ENCODE measurements at regions of chr17 and their contacts with region 1.

Region 1: GRCh38 chr17:58006924-58007780 is at the start of gene SRSF1:
- DNase-seq: peak; percentile 90 to 99 (median 94)
- ATAC-seq: peak; percentile 85
- H3K4me3 ChIP-seq: peak within 1 kb of the TSS; percentile 94
- H3K27ac ChIP-seq: peak within 1 kb of the TSS; percentile 100
- H3K4me1 ChIP-seq: peaks cover 4 to 24% of the 10 kb centered on the region in 2 experiments; a peak in 3 of 5 replicates
- H3K27me3 ChIP-seq: no peaks in the 10 kb centered on the region
- CTCF ChIP-seq: no peak
- EP300 ChIP-seq: peak; percentile 19
- POLR2A ChIP-seq: peak; percentile 98
- RAD21 ChIP-seq: no peak
- polyA plus RNA-seq, gene SRSF1: 77.8 to 98.4 TPM

Region 2: DNA sequence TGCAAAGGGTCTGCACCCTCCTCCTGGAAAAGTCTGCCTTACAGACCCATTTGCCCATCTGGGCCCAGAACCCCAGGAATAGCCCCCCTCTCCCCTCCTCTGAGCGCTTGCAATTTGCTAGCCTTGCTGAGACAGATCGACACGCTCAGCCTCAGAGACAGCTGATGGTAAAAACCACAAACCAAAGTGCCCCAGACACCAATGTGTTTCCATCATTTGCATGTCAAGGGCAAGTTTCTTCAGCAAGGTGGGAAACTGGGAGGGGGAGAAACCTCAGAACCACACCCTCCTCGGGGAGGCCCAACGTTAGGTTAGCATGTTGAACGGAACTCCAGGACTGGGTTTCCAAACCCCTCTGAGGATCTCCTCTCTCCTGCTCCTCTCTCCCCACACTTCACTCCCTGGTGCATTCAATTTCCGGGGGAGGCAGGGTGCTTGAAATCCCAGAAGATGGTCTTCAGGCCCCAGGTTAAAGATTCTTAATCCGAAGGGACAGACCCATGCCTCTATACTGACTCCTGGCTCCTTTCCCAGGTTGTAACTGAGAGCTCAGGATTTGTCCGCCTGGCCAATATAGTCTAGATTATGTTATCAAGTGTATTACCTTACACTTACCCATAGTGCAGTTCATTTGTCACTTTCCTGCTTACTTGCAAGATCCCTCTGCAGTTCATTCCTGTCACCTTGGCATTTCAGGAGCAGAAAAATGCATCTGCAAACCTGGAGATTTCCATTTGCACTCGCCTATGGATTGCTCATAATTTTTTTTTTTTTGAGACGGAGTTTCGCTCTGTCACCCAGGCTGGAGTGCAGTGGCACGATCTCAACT is 50.6 kb before region 1 on chr17:
- CTCF ChIA-PET with region 1: no interaction called
- POLR2A ChIA-PET with region 1: no interaction called
- in situ Hi-C with region 1: no loop called
- intact Hi-C with region 1: no loop called
- DNase-seq: no peak
- ATAC-seq: no peak
- H3K4me3 ChIP-seq: no peak overlapping the region
- H3K27ac ChIP-seq: no peak overlapping the region
- H3K4me1 ChIP-seq: peaks cover 4 to 13% of the 10 kb centered on the region in 2 experiments; a peak in 3 of 5 replicates
- H3K27me3 ChIP-seq: peaks cover 26 to 50% of the 10 kb centered on the region in 2 experiments
- CTCF ChIP-seq: no peak
- EP300 ChIP-seq: no peak
- POLR2A ChIP-seq: no peak
- RAD21 ChIP-seq: no peak

Region 3: DNA sequence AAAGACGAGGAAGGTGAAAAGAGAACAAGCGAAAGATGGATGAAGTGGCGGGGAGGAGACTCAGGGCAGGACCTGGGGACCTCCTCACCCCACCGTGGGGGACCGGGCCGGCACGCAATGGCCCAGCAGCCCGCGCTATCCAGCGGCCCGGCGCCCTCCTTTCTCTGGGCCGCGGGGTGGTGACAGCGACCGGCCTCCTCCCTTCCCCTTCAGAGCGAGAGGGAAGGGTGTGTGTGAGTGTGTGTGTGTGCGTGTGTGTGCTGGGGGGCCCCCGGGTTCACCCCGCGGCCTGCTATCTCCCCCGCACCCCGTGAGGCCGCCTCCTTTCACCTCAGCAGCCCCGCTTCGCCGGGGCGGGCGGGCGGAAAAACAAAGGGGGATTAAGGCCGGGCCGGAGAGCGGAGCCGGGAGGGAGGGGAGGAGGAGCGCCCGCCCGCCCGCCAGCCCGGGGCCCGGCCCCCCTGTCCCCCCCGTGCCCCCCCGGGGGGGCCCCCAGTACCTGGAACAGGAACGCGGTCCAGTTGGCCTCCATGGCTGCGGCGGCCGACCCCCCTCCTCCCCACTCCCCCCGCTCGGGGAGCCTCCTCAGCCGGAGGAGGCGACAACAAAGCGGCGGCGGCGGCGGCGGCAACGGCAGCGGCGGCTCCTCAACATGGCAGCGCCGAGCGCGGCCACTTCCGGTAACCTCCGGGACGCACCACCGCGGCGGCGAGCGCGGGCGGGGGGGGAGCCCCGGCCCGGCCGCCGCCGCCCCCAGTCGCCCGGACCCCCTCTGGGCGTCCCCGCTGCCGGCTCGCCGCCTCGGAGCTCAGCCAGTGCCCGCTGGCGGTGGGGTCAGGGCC is 19.4 kb before region 1 on chr17 and contains the start of gene VEZF1:
- CTCF ChIA-PET with region 1: no interaction called
- POLR2A ChIA-PET with region 1: interaction called, 82 read pairs
- in situ Hi-C with region 1: no loop called
- intact Hi-C with region 1: no loop called
- DNase-seq: peak; percentile 84 to 95 (median 90)
- ATAC-seq: peak; percentile 77
- H3K4me3 ChIP-seq: peak within 1 kb of the TSS; percentile 75
- H3K27ac ChIP-seq: peak within 1 kb of the TSS; percentile 78
- H3K4me1 ChIP-seq: peaks cover 12 to 37% of the 10 kb centered on the region in 2 experiments; a peak in 3 of 5 replicates
- H3K27me3 ChIP-seq: no peaks in the 10 kb centered on the region
- CTCF ChIP-seq: no peak
- EP300 ChIP-seq: no peak
- POLR2A ChIP-seq: no peak; the same call in 1 of the 2 replicates
- RAD21 ChIP-seq: no peak; a peak in 1 of 4 replicates
- polyA plus RNA-seq, gene VEZF1: 9.5 to 9.8 TPM

Region 4: DNA sequence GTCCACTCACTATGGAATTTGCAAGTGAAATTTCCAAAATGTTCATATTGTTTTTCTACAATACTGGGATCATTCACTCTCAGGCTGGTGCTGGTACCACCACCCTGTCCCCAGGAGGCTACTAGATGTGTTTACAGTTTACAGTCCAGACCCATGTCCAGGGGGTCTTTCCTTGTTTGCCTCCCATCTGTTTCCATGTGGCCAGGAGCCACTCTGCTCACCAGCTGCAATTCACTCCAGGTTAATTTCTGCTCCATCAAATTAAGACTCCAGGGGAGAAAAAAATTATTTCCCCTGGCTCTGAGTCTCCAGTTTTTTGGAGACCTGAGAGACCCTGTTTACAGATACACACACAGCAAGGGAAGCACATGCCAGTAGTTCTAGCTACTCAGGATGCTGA is 12.4 kb after region 1 on chr17:
- CTCF ChIA-PET with region 1: no interaction called
- POLR2A ChIA-PET with region 1: interaction called, 18 read pairs
- in situ Hi-C with region 1: no loop called
- intact Hi-C with region 1: no loop called
- DNase-seq: no peak
- ATAC-seq: no peak
- H3K4me3 ChIP-seq: no peak overlapping the region
- H3K27ac ChIP-seq: no peak overlapping the region
- H3K4me1 ChIP-seq: no peaks in the 10 kb centered on the region; a peak in 2 of 5 replicates
- H3K27me3 ChIP-seq: peaks cover 3 to 21% of the 10 kb centered on the region in 2 experiments; a peak in 4 of 5 replicates
- CTCF ChIP-seq: no peak
- EP300 ChIP-seq: no peak
- POLR2A ChIP-seq: no peak
- RAD21 ChIP-seq: no peak

Region 5: GRCh38 chr17:58082870-58083490 is 75.8 kb after region 1 on chr17 and contains the start of gene DYNLL2:
- CTCF ChIA-PET with region 1: no interaction called
- POLR2A ChIA-PET with region 1: interaction called, 23 read pairs
- in situ Hi-C with region 1: no loop called
- intact Hi-C with region 1: loop called (anchors 1 kb)
- DNase-seq: peak; percentile 96 to 97 (median 96)
- ATAC-seq: peak; percentile 84
- H3K4me3 ChIP-seq: peak within 1 kb of the TSS; percentile 91
- H3K27ac ChIP-seq: peak within 1 kb of the TSS; percentile 88
- H3K4me1 ChIP-seq: peaks cover 27 to 49% of the 10 kb centered on the region in 2 experiments
- H3K27me3 ChIP-seq: no peaks in the 10 kb centered on the region
- CTCF ChIP-seq: no peak
- EP300 ChIP-seq: no peak
- POLR2A ChIP-seq: peak; percentile 42
- RAD21 ChIP-seq: no peak
- polyA plus RNA-seq, gene DYNLL2: 1.8 to 2.3 TPM